CD4-positive, alpha-beta memory T cell (primary cell): ENCODE measurements at regions of chr9 and their contacts with region 1.

Region 1: GRCh38 chr9:2087500-2088313 is 72.6 kb downstream of the SMARCA2 start:
- DNase-seq: peak in 4 of 5 donors; percentile 60 to 64 (median 60)
- H3K4me3 ChIP-seq: no peak overlapping the region
- H3K4me3 Mint-ChIP-seq: no peak overlapping the region
- H3K27ac ChIP-seq: no peak overlapping the region
- H3K27ac Mint-ChIP-seq: peak overlapping the region in 3 of 7 donors; percentile 3 to 60 (median 54)
- H3K4me1 ChIP-seq: no peaks in the 10 kb centered on the region
- H3K4me1 Mint-ChIP-seq: peaks cover 3 to 6% (median 5%) of the 10 kb centered on the region in 4 donors
- H3K27me3 ChIP-seq: no peaks in the 10 kb centered on the region
- H3K27me3 Mint-ChIP-seq: no peaks in the 10 kb centered on the region

Region 2: DNA sequence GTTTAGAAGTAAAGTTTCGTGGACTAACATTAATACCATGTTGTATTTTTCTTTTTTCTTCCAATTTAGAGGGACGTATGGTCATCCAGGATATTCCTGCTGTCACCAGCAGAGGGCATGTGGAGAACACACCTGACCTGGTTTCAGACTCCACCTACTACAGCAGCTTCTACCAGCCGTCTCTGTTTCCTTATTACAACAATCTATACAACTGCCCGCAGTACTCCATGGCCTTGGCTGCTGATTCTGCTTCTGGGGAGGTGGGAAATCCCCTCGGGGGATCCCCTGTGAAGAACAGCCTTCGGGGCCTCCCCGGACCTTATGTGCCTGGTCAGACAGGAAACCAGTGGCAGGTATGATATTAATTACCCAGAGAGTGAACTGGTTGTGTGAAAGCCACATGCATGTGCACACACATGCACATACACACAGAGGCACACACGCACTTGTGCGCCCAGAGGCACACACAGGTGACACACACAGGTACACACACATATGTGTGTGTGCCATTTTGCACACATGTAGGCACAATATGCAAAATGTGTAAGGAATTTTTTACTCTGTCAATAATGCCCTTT is 1193.8 kb before region 1 on chr9:
- CTCF ChIA-PET with region 1: no interaction called
- POLR2A ChIA-PET with region 1: no interaction called
- intact Hi-C with region 1: loop called (anchors 5 kb)
- DNase-seq: peak; percentile 47 to 70 (median 58)
- H3K4me3 ChIP-seq: no peak overlapping the region
- H3K4me3 Mint-ChIP-seq: peak overlapping the region in 7 of 8 donors; percentile 3 to 78 (median 64)
- H3K27ac ChIP-seq: no peak overlapping the region
- H3K27ac Mint-ChIP-seq: peak overlapping the region in 4 of 7 donors; percentile 40 to 84 (median 74)
- H3K4me1 ChIP-seq: peaks cover 11% of the 10 kb centered on the region
- H3K4me1 Mint-ChIP-seq: peaks cover 6 to 12% (median 10%) of the 10 kb centered on the region in 4 donors
- H3K27me3 ChIP-seq: no peaks in the 10 kb centered on the region
- H3K27me3 Mint-ChIP-seq: peaks cover 2 to 7% of the 10 kb centered on the region in 2 donors

Region 3: GRCh38 chr9:1709345-1709744 is 378.4 kb before region 1 on chr9:
- CTCF ChIA-PET with region 1: interaction called, 7 read pairs
- POLR2A ChIA-PET with region 1: no interaction called
- intact Hi-C with region 1: loop called (anchors 1 kb)
- DNase-seq: peak in 3 of 5 donors; percentile 3 to 8 (median 4)
- H3K4me3 ChIP-seq: no peak overlapping the region
- H3K4me3 Mint-ChIP-seq: no peak overlapping the region
- H3K27ac ChIP-seq: no peak overlapping the region
- H3K27ac Mint-ChIP-seq: no peak overlapping the region
- H3K4me1 ChIP-seq: no peaks in the 10 kb centered on the region
- H3K4me1 Mint-ChIP-seq: no peaks in the 10 kb centered on the region
- H3K27me3 ChIP-seq: no peaks in the 10 kb centered on the region
- H3K27me3 Mint-ChIP-seq: peaks cover 8 to 16% of the 10 kb centered on the region in 2 donors

Region 4: GRCh38 chr9:1726993-1727759 is 360.5 kb before region 1 on chr9:
- CTCF ChIA-PET with region 1: interaction called, 3 read pairs
- POLR2A ChIA-PET with region 1: no interaction called
- intact Hi-C with region 1: loop called (anchors 1 kb)
- DNase-seq: peak in 4 of 5 donors; percentile 5 to 22 (median 14)
- H3K4me3 ChIP-seq: no peak overlapping the region
- H3K4me3 Mint-ChIP-seq: no peak overlapping the region
- H3K27ac ChIP-seq: no peak overlapping the region
- H3K27ac Mint-ChIP-seq: no peak overlapping the region
- H3K4me1 ChIP-seq: no peaks in the 10 kb centered on the region
- H3K4me1 Mint-ChIP-seq: peaks cover 0 to 1% (median 0%) of the 10 kb centered on the region in 4 donors
- H3K27me3 ChIP-seq: no peaks in the 10 kb centered on the region
- H3K27me3 Mint-ChIP-seq: peaks cover 4 to 6% of the 10 kb centered on the region in 2 donors

Region 5: GRCh38 chr9:1869843-1870242 is 217.9 kb before region 1 on chr9:
- CTCF ChIA-PET with region 1: interaction called, 3 read pairs
- POLR2A ChIA-PET with region 1: no interaction called
- intact Hi-C with region 1: loop called (anchors 2 kb)
- DNase-seq: peak; percentile 12 to 36 (median 22)
- H3K4me3 ChIP-seq: no peak overlapping the region
- H3K4me3 Mint-ChIP-seq: no peak overlapping the region
- H3K27ac ChIP-seq: no peak overlapping the region
- H3K27ac Mint-ChIP-seq: no peak overlapping the region
- H3K4me1 ChIP-seq: peaks cover 12% of the 10 kb centered on the region
- H3K4me1 Mint-ChIP-seq: peaks cover 5 to 23% (median 16%) of the 10 kb centered on the region in 4 donors
- H3K27me3 ChIP-seq: no peaks in the 10 kb centered on the region
- H3K27me3 Mint-ChIP-seq: no peaks in the 10 kb centered on the region

Region 6: DNA sequence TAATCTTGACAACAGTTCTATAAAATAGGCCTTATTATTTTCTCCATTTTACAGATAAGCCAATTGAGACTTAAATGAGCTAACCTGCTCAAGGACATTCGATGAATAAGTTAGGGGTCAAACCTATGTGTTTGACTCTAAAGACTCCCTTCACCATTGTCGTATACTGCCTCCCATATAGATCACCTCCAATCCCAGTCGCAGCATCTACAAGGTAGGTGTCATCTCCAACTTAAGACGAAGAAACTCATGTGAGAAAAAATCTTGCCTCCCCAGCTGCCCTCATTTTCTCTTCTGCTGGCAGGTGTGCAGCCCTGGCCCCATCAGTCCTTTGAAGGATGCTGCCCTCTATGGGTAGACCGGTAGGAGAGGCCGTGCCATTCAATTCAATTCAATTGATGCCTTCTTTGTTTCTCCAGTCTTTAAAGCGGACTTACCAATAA is 147.8 kb before region 1 on chr9:
- CTCF ChIA-PET with region 1: interaction called, 6 read pairs
- POLR2A ChIA-PET with region 1: no interaction called
- intact Hi-C with region 1: loop called (anchors 1 kb)
- DNase-seq: peak; percentile 38 to 48 (median 46)
- H3K4me3 ChIP-seq: no peak overlapping the region
- H3K4me3 Mint-ChIP-seq: no peak overlapping the region
- H3K27ac ChIP-seq: no peak overlapping the region
- H3K27ac Mint-ChIP-seq: no peak overlapping the region
- H3K4me1 ChIP-seq: no peaks in the 10 kb centered on the region
- H3K4me1 Mint-ChIP-seq: peaks cover 0 to 4% (median 2%) of the 10 kb centered on the region in 4 donors
- H3K27me3 ChIP-seq: no peaks in the 10 kb centered on the region
- H3K27me3 Mint-ChIP-seq: peaks cover 1 to 7% of the 10 kb centered on the region in 2 donors

Region 7: DNA sequence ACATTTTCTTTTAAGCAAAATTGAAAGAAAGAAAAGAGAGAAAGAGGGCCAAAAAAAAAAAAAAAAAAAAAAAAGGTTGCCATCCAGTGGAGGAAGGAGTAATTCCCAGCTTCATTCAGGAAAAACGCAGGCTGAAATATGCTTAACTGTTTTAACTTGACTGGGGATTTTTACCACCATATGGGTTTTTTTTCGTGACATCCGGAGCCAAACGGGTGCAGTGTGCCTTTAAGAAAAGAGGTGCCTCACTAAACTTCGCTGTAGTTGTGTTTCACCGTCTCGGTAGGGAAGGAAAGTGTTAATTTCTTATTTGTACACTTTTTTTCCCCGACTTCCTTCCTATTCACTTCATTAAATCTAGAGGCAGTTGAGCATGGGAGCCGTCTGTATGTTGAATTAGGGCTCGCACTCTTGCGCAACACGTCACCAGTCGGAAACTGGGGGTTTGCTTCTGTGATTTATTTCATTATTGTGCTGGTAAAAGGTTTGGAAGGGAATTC is 70.5 kb after region 1 on chr9:
- CTCF ChIA-PET with region 1: no interaction called
- POLR2A ChIA-PET with region 1: no interaction called
- intact Hi-C with region 1: no loop called
- DNase-seq: peak; percentile 52 to 74 (median 63)
- H3K4me3 ChIP-seq: peak overlapping the region; percentile 36 to 48
- H3K4me3 Mint-ChIP-seq: peak overlapping the region; percentile 85 to 92 (median 90)
- H3K27ac ChIP-seq: peak overlapping the region; percentile 24
- H3K27ac Mint-ChIP-seq: peak overlapping the region; percentile 65 to 92 (median 85)
- H3K4me1 ChIP-seq: peaks cover 60% of the 10 kb centered on the region
- H3K4me1 Mint-ChIP-seq: peaks cover 42 to 81% (median 62%) of the 10 kb centered on the region in 4 donors
- H3K27me3 ChIP-seq: no peaks in the 10 kb centered on the region
- H3K27me3 Mint-ChIP-seq: no peaks in the 10 kb centered on the region

Region 8: DNA sequence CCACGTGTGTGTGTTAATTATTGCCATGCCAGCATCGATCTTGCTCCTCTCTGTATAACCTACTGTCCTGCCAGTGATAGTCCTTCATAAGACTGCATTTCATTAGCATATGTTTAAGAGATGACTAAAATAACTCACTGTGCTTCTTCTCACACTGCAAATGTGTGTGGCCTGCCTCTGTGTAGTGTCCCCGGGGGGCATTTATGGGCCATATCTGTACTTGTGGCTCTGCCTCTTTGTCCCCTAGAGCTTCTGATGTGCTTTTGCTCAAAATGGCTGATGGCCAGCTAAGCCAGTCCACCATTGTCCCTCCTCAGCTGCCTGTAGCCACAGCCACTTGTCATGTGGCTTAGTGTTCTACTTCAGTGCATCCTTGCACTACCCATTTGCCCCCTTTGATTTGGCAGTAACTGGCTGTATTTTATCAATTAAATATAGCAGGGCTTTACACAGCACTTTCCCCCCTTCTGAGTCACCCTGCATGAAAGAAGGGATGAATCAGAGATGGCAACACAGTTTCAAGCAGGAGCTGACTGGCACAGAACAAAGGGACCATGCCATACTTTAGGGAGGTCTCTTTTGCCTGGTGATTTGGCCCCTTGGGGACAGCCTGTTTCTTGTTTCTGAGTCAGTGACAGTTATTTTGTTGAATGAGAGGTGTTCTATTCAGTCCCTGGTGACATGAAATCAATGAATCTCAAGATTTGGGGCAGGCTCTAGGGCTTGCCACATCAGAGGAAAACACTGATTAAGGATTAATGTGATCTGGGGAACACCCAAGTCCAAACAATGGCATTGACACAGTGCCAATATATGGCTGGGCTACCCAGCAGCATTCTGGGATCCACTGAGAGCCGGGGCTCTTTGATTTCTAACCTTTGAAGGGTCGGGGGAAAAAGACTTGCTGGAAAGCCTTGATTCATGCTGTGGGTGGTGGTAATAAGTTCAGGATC is 172.9 kb after region 1 on chr9:
- CTCF ChIA-PET with region 1: no interaction called
- POLR2A ChIA-PET with region 1: no interaction called
- intact Hi-C with region 1: no loop called
- DNase-seq: no peak
- H3K4me3 ChIP-seq: no peak overlapping the region
- H3K4me3 Mint-ChIP-seq: no peak overlapping the region
- H3K27ac ChIP-seq: no peak overlapping the region
- H3K27ac Mint-ChIP-seq: no peak overlapping the region
- H3K4me1 ChIP-seq: no peaks in the 10 kb centered on the region
- H3K4me1 Mint-ChIP-seq: peaks cover 4 to 7% (median 5%) of the 10 kb centered on the region in 4 donors
- H3K27me3 ChIP-seq: no peaks in the 10 kb centered on the region
- H3K27me3 Mint-ChIP-seq: peaks cover 3 to 8% of the 10 kb centered on the region in 2 donors